ENCODE measurements at regions of chr19 and their contacts with region 1.

Region 1: DNA sequence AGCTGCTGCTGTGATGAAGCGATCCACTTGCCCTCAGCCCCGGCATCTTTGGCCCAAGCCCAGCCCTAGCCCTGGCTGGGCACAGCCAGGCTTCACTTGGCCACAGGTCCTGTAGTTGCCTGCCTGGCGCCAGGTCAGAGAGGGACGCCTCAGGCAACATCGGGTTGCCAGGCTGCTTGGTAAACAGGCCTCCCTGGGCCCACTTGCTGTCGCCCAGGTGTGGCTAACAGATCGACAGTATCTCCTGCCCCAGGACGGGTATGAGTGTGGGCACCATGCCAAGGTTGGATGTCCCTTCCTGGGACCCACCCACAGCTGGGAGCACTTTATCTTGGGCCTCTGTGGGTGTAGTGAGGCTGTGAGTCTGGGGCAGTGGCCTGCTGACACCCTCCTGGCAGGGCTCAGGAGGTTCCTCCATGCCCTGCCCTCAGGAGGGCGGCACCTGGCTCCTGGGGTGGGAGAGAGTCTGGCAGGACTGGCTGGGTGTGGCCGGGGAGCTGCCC is 27.8 kb downstream of the CARM1 start:
- DNase-seq: no peak
- ATAC-seq: no peak
- H3K4me3 Mint-ChIP-seq: no peak overlapping the region
- H3K27ac Mint-ChIP-seq: no peak overlapping the region
- H3K4me1 Mint-ChIP-seq: peaks cover 26% of the 10 kb centered on the region
- H3K27me3 Mint-ChIP-seq: no peaks in the 10 kb centered on the region
- CTCF ChIP-seq: no peak

Region 2: GRCh38 chr19:10884274-10884673 is 14.9 kb before region 1 on chr19:
- CTCF ChIA-PET with region 1: interaction called, 10 read pairs
- POLR2A ChIA-PET with region 1: interaction called, 8 read pairs
- DNase-seq: no peak
- ATAC-seq: no peak
- H3K4me3 Mint-ChIP-seq: no peak overlapping the region
- H3K27ac Mint-ChIP-seq: no peak overlapping the region
- H3K4me1 Mint-ChIP-seq: peaks cover 73% of the 10 kb centered on the region
- H3K27me3 Mint-ChIP-seq: no peaks in the 10 kb centered on the region
- CTCF ChIP-seq: no peak

Measured in WTC11 (cell line).